Calu3 (cell line): ENCODE measurements at regions of chr14 and their contacts with region 1.

Region 1: GRCh38 chr14:73438993-73439392 is 19.4 kb downstream of the NUMB start:
- DNase-seq: no peak
- H3K4me3 Mint-ChIP-seq: no peak overlapping the region
- H3K27ac Mint-ChIP-seq: no peak overlapping the region
- H3K4me1 Mint-ChIP-seq: no peaks in the 10 kb centered on the region
- H3K27me3 Mint-ChIP-seq: no peaks in the 10 kb centered on the region
- CTCF ChIP-seq: no peak

Region 2: DNA sequence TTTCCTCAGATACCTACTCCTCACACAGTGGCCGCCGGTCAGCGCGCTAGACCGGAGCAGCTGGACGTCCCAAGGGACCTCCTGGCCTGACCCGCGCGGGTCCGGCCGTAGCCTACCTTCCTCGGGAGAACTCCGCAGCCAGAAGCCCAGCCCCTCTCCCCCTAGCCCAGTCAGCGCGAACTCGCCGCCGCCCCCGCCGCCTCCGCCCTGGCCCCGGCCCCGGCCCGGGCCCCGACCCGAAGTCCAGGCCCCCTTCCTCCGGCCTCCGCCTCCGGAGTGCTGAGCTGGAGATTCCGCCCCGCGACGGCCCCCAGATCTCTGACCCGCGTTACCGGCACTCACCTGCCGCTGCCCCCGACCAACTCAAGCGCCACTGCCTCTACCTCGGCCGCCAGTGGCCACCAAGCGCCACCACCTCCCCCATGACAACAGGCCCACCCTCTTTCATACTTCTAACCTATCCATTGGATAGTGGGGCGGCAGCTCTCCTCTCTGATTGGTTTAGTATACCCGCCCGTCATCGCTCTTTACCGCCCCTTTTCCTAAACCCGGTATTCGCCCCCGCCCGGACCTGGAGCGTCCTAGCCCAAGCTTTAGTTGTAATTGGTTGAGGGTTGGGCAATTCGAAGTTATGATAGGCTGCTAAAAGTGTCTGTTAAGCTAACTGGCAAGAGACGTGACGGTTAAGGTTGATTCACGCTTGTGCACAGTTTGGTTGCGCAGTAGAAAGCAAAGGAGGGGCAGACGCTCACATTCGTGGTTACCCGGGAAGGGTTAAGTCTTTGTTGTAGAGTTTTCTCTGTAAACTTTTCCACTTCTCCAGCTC is 19.4 kb after region 1 on chr14 and contains the start of gene NUMB:
- CTCF ChIA-PET with region 1: interaction called, 10 read pairs
- intact Hi-C with region 1: no loop called
- DNase-seq: peak; percentile 96
- H3K4me3 Mint-ChIP-seq: peak within 1 kb of the TSS; percentile 85
- H3K27ac Mint-ChIP-seq: peak within 1 kb of the TSS; percentile 99
- H3K4me1 Mint-ChIP-seq: peaks cover 37% of the 10 kb centered on the region
- H3K27me3 Mint-ChIP-seq: no peaks in the 10 kb centered on the region
- CTCF ChIP-seq: no peak
- total RNA-seq, gene NUMB: 75.2 and 75.3 TPM in 2 replicates